B cell (primary cell): ENCODE measurements at regions of chr11 and their contacts with region 1.

Region 1: GRCh38 chr11:95715777-95716241 is 73.8 kb downstream of the FAM76B start:
- DNase-seq: peak; percentile 94
- ATAC-seq: peak; percentile 80
- H3K4me3 ChIP-seq: peak overlapping the region in 4 of 5 experiments; percentile 16 to 55 (median 28)
- H3K4me3 Mint-ChIP-seq: peak overlapping the region; percentile 68
- H3K27ac ChIP-seq: peak overlapping the region; percentile 94 to 98
- H3K27ac Mint-ChIP-seq: peak overlapping the region; percentile 92
- H3K4me1 ChIP-seq: peaks cover 80 to 84% of the 10 kb centered on the region in 2 donors
- H3K4me1 Mint-ChIP-seq: peaks cover 85% of the 10 kb centered on the region
- H3K27me3 ChIP-seq: no peaks in the 10 kb centered on the region
- H3K27me3 Mint-ChIP-seq: no peaks in the 10 kb centered on the region
- CTCF ChIP-seq: no peak

Region 2: DNA sequence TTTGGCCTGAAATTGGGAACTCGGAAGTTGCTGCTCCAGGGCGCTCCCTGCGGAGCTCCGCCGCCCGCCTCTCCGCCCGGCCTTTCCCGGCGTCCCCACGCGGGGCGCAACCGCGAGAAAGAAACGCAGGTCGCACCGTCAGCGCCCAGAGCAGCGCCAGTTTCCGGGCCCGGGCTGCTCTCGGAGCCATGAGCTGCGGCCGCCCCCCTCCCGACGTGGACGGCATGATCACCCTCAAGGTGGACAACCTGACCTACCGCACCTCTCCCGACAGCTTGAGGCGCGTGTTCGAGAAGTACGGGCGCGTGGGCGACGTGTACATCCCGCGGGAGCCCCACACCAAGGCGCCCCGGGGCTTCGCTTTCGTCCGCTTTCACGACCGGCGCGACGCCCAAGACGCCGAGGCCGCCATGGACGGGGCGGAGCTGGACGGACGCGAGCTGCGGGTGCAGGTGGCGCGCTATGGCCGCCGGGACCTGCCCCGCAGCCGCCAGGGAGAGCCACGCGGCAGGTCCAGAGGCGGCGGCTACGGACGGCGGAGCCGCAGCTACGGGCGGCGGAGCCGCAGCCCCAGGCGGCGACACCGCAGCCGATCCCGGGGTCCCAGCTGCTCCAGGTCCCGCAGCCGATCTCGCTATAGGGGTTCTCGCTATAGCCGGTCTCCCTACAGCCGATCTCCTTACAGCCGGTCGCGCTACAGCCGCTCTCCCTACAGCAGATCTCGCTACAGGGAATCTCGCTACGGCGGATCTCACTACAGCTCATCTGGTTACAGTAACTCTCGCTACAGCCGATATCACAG is 648.6 kb before region 1 on chr11:
- CTCF ChIA-PET with region 1: interaction called, 9 read pairs
- POLR2A ChIA-PET with region 1: no interaction called
- intact Hi-C with region 1: loop called (anchors 2 kb)
- DNase-seq: peak; percentile 88
- ATAC-seq: peak; percentile 78
- H3K4me3 ChIP-seq: peak overlapping the region; percentile 70 to 95 (median 93)
- H3K4me3 Mint-ChIP-seq: peak overlapping the region; percentile 100
- H3K27ac ChIP-seq: peak overlapping the region; percentile 78 to 87
- H3K27ac Mint-ChIP-seq: peak overlapping the region; percentile 100
- H3K4me1 ChIP-seq: peaks cover 14 to 22% of the 10 kb centered on the region in 2 donors
- H3K4me1 Mint-ChIP-seq: peaks cover 26% of the 10 kb centered on the region
- H3K27me3 ChIP-seq: no peaks in the 10 kb centered on the region
- H3K27me3 Mint-ChIP-seq: no peaks in the 10 kb centered on the region
- CTCF ChIP-seq: peak; percentile 52

Region 3: GRCh38 chr11:95296621-95297025 is 419.2 kb before region 1 on chr11:
- CTCF ChIA-PET with region 1: interaction called, 6 read pairs
- POLR2A ChIA-PET with region 1: no interaction called
- intact Hi-C with region 1: loop called (anchors 2 kb)
- DNase-seq: peak; percentile 84
- ATAC-seq: peak; percentile 90
- H3K4me3 ChIP-seq: peak overlapping the region in 4 of 5 experiments; percentile 10 to 53 (median 26)
- H3K4me3 Mint-ChIP-seq: peak overlapping the region; percentile 82
- H3K27ac ChIP-seq: peak overlapping the region; percentile 81 to 82
- H3K27ac Mint-ChIP-seq: peak overlapping the region; percentile 95
- H3K4me1 ChIP-seq: peaks cover 44 to 47% of the 10 kb centered on the region in 2 donors
- H3K4me1 Mint-ChIP-seq: peaks cover 48% of the 10 kb centered on the region
- H3K27me3 ChIP-seq: no peaks in the 10 kb centered on the region
- H3K27me3 Mint-ChIP-seq: no peaks in the 10 kb centered on the region
- CTCF ChIP-seq: peak; percentile 9

Region 4: GRCh38 chr11:95699631-95700470 is 16.0 kb before region 1 on chr11:
- CTCF ChIA-PET with region 1: interaction called, 93 read pairs
- POLR2A ChIA-PET with region 1: interaction called, 4 read pairs
- intact Hi-C with region 1: loop called (anchors 1 kb)
- DNase-seq: no peak
- ATAC-seq: peak; percentile 49
- H3K4me3 ChIP-seq: peak overlapping the region in 4 of 5 experiments; percentile 25 to 56 (median 32)
- H3K4me3 Mint-ChIP-seq: peak overlapping the region; percentile 79
- H3K27ac ChIP-seq: peak overlapping the region; percentile 83 to 89
- H3K27ac Mint-ChIP-seq: peak overlapping the region; percentile 88
- H3K4me1 ChIP-seq: peaks cover 49 to 53% of the 10 kb centered on the region in 2 donors
- H3K4me1 Mint-ChIP-seq: peaks cover 52% of the 10 kb centered on the region
- H3K27me3 ChIP-seq: no peaks in the 10 kb centered on the region
- H3K27me3 Mint-ChIP-seq: no peaks in the 10 kb centered on the region
- CTCF ChIP-seq: no peak

Region 5: GRCh38 chr11:95739108-95739938 is 23.5 kb after region 1 on chr11:
- CTCF ChIA-PET with region 1: interaction called, 12 read pairs
- POLR2A ChIA-PET with region 1: no interaction called
- intact Hi-C with region 1: loop called (anchors 2 kb)
- DNase-seq: no peak
- ATAC-seq: no peak
- H3K4me3 ChIP-seq: no peak overlapping the region
- H3K4me3 Mint-ChIP-seq: no peak overlapping the region
- H3K27ac ChIP-seq: no peak overlapping the region
- H3K27ac Mint-ChIP-seq: no peak overlapping the region
- H3K4me1 ChIP-seq: peaks cover 2 to 3% of the 10 kb centered on the region in 2 donors
- H3K4me1 Mint-ChIP-seq: peaks cover 16% of the 10 kb centered on the region
- H3K27me3 ChIP-seq: no peaks in the 10 kb centered on the region
- H3K27me3 Mint-ChIP-seq: no peaks in the 10 kb centered on the region
- CTCF ChIP-seq: no peak

Region 6: DNA sequence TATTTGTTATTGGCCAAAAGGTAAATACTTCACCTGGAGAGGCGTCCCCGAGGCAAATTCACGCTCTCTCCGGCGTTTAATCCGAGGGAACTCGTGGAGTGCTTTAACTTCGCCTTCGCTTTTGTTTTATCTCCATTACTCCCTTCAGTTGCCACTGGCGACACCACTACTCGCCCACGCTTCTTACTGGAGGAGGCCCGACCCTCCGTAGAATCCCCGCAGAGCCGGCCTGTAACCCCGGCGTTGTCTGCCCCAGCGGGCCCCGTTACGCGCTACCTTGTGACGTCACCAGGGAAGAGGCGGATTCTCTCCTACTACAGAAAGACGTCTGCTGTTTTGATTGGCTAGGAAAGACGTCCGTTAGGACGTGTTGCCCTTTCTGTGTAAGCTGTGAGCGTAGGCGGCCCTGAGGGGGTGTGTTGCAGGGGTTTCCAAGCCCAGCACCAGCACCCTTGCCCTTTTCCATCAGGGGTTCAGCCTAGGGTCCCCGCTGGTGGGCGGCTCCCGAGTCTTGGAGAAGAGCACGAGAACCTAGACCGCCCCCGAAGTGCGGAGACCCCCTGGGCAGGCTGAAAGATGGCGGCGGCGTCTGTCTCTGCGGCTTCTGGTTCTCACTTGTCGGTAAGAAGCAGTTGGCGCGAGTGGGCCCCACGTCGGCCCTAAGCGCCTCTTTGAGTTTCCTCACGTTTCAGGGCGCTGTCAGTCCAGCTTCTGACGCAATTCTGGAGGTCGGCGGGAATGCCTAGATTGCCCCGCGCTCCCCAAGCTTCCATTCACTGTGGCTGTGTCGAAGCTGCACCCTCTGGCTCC is 74.5 kb after region 1 on chr11 and contains the start of gene CEP57:
- CTCF ChIA-PET with region 1: interaction called, 6 read pairs
- POLR2A ChIA-PET with region 1: interaction called, 7 read pairs
- intact Hi-C with region 1: loop called (anchors 1 kb)
- DNase-seq: peak; percentile 98
- ATAC-seq: peak; percentile 63
- H3K4me3 ChIP-seq: peak within 1 kb of the TSS; percentile 73 to 99 (median 96)
- H3K4me3 Mint-ChIP-seq: peak within 1 kb of the TSS; percentile 97
- H3K27ac ChIP-seq: peak within 1 kb of the TSS; percentile 98 to 100
- H3K27ac Mint-ChIP-seq: peak within 1 kb of the TSS; percentile 99
- H3K4me1 ChIP-seq: peaks cover 20% of the 10 kb centered on the region in 2 donors
- H3K4me1 Mint-ChIP-seq: peaks cover 51% of the 10 kb centered on the region
- H3K27me3 ChIP-seq: no peaks in the 10 kb centered on the region
- H3K27me3 Mint-ChIP-seq: no peaks in the 10 kb centered on the region
- CTCF ChIP-seq: no peak
- total RNA-seq, gene CEP57: 78.1 and 82.9 TPM in 2 replicates

Region 7: GRCh38 chr11:96254087-96254486 is 538.3 kb after region 1 on chr11:
- CTCF ChIA-PET with region 1: no interaction called
- POLR2A ChIA-PET with region 1: no interaction called
- intact Hi-C with region 1: loop called (anchors 10 kb)
- DNase-seq: peak; percentile 33
- ATAC-seq: no peak
- H3K4me3 ChIP-seq: peak overlapping the region; percentile 7 to 53 (median 34)
- H3K4me3 Mint-ChIP-seq: peak overlapping the region; percentile 89
- H3K27ac ChIP-seq: peak overlapping the region; percentile 95 to 99
- H3K27ac Mint-ChIP-seq: peak overlapping the region; percentile 94
- H3K4me1 ChIP-seq: peaks cover 67 to 69% of the 10 kb centered on the region in 2 donors
- H3K4me1 Mint-ChIP-seq: peaks cover 82% of the 10 kb centered on the region
- H3K27me3 ChIP-seq: no peaks in the 10 kb centered on the region
- H3K27me3 Mint-ChIP-seq: no peaks in the 10 kb centered on the region
- CTCF ChIP-seq: no peak